ENCODE measurements at regions of chr3 and their contacts with region 1.

Region 1: GRCh38 chr3:157067114-157067513 is 92.8 kb downstream of the CCNL1 start:
- DNase-seq: no peak
- H3K4me3 ChIP-seq: no peak overlapping the region
- H3K27ac ChIP-seq: no peak overlapping the region
- H3K4me1 ChIP-seq: no peaks in the 10 kb centered on the region; a peak in 1 of 4 replicates
- H3K27me3 ChIP-seq: no peaks in the 10 kb centered on the region
- CTCF ChIP-seq: no peak
- EP300 ChIP-seq: no peak
- RAD21 ChIP-seq: no peak

Region 2: GRCh38 chr3:156978481-156978961 is 88.6 kb before region 1 on chr3:
- CTCF ChIA-PET with region 1: no interaction called
- POLR2A ChIA-PET with region 1: no interaction called
- DNase-seq: no peak
- H3K4me3 ChIP-seq: no peak overlapping the region
- H3K27ac ChIP-seq: no peak overlapping the region
- H3K4me1 ChIP-seq: peaks cover 0 to 4% of the 10 kb centered on the region in 2 experiments; a peak in 2 of 4 replicates
- H3K27me3 ChIP-seq: 0 out of 2 replicates have a peak, but pooled peaks cover 5% of the 10 kb centered on the region
- CTCF ChIP-seq: no peak
- EP300 ChIP-seq: no peak
- RAD21 ChIP-seq: no peak

Region 3: GRCh38 chr3:157081681-157082210 is 14.6 kb after region 1 on chr3:
- CTCF ChIA-PET with region 1: interaction called, 13 read pairs
- POLR2A ChIA-PET with region 1: no interaction called
- DNase-seq: peak; percentile 84
- H3K4me3 ChIP-seq: no peak overlapping the region; a peak in 1 of 4 replicates
- H3K27ac ChIP-seq: peak overlapping the region; percentile 43 to 58; a peak in 2 of 4 replicates
- H3K4me1 ChIP-seq: peaks cover 18 to 27% of the 10 kb centered on the region in 2 experiments; a peak in 3 of 4 replicates
- H3K27me3 ChIP-seq: no peaks in the 10 kb centered on the region
- CTCF ChIP-seq: peak; percentile 96
- EP300 ChIP-seq: no peak
- RAD21 ChIP-seq: peak; percentile 98

Region 4: GRCh38 chr3:157263027-157263426 is 195.9 kb after region 1 on chr3:
- CTCF ChIA-PET with region 1: no interaction called
- POLR2A ChIA-PET with region 1: no interaction called
- DNase-seq: no peak
- H3K4me3 ChIP-seq: no peak overlapping the region
- H3K27ac ChIP-seq: peak overlapping the region in 1 of 2 experiments; percentile 62; a peak in 3 of 4 replicates
- H3K4me1 ChIP-seq: no peaks in the 10 kb centered on the region
- H3K27me3 ChIP-seq: no peaks in the 10 kb centered on the region
- CTCF ChIP-seq: no peak
- EP300 ChIP-seq: no peak
- RAD21 ChIP-seq: no peak

Measured in SK-N-SH (cell line).